H1 (cell line): ENCODE measurements at regions of chr16 and their contacts with region 1.

Region 1: DNA sequence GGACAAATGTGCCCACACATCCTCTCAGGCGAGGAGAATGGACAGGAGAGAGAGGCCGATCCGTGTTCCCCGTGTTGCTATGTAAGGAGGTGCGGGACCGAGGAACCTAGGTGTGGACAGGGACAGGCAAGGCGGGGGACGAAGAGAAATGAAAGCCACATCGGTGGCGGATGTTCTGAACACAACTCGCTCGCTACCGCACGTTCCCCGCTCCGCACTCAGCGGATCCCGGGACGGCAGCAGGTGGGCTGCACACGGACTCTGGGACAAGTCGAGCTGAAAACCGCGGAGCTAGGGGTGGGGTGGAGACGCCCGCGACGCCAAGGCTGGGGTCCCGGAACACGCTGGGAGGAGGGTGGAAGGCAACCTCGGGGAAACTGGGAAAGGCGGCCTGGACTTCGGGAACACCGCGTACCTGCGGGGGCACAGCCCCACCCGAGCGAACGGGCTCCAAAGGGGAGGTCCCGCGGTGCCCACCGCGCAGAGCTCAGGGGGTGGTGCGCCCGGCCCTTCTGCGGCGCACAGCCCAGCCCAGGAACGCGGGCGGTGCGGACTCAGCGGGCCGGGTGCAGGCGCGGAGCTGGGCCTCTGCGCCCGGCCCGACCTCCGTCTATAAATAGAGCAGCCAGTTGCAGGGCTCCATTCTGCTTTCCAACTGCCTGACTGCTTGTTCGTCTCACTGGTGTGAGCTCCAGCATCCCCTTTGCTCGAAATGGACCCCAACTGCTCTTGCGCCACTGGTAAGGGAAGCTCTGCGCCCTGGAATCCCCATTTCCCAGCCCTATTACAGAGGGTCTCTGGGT is at the start of gene MT1E:
- DNase-seq: peak in 1 of 2 experiments; percentile 66
- H3K4me3 ChIP-seq: peak within 1 kb of the TSS; percentile 26 to 61 (median 46)
- H3K27ac ChIP-seq: no peak within 1 kb of the TSS
- H3K4me1 ChIP-seq: peaks cover 0 to 17% (median 14%) of the 10 kb centered on the region in 4 experiments; a peak in 6 of 7 replicates
- H3K27me3 ChIP-seq: peaks cover 53 to 86% (median 82%) of the 10 kb centered on the region in 4 experiments
- CTCF ChIP-seq: no peak
- EP300 ChIP-seq: no peak
- POLR2A ChIP-seq: no peak
- RAD21 ChIP-seq: no peak
- total RNA-seq, gene MT1E: 3.5 and 7.9 TPM in 2 replicates

Region 2: DNA sequence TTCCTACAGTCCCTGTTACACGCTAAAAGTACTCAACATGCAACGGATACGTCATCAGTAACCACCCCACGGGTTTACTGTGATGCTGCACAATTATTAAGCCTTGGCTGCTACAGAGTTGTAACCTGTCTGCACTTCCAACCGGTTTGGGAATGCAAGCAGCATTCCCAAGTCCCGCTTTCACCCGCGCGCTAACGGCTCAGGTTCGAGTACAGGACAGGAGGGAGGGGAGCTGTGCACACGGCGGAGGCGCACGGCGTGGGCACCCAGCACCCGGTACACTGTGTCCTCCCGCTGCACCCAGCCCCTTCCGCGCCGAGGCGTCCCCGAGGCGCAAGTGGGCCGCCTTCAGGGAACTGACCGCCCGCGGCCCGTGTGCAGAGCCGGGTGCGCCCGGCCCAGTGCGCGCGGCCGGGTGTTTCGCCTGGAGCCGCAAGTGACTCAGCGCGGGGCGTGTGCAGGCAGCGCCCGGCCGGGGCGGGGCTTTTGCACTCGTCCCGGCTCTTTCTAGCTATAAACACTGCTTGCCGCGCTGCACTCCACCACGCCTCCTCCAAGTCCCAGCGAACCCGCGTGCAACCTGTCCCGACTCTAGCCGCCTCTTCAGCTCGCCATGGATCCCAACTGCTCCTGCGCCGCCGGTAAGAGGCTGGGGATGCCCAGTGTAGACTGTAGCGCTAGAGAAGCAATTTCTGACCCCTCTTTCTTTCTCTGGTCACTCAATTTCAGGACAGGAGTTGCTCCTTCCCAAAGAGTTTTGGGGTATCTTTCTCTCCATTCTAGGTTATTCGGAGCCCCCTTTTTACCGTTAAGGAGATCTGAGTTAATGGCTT is 17.1 kb before region 1 on chr16 and contains the start of gene MT2A:
- CTCF ChIA-PET with region 1: interaction called, 11 read pairs
- POLR2A ChIA-PET with region 1: interaction called, 66 read pairs
- DNase-seq: peak in 1 of 2 experiments; percentile 74
- H3K4me3 ChIP-seq: peak within 1 kb of the TSS; percentile 35 to 62 (median 47)
- H3K27ac ChIP-seq: no peak within 1 kb of the TSS
- H3K4me1 ChIP-seq: peaks cover 7 to 21% (median 10%) of the 10 kb centered on the region in 4 experiments
- H3K27me3 ChIP-seq: peaks cover 27 to 64% (median 52%) of the 10 kb centered on the region in 4 experiments
- CTCF ChIP-seq: no peak
- EP300 ChIP-seq: no peak
- POLR2A ChIP-seq: no peak
- RAD21 ChIP-seq: no peak
- total RNA-seq, gene MT2A: 9.2 and 9.5 TPM in 2 replicates

Region 3: GRCh38 chr16:56643080-56643778 is 17.9 kb after region 1 on chr16:
- CTCF ChIA-PET with region 1: interaction called, 12 read pairs
- POLR2A ChIA-PET with region 1: interaction called, 32 read pairs
- DNase-seq: peak in 1 of 2 experiments; percentile 67
- H3K4me3 ChIP-seq: peak overlapping the region; percentile 18 to 51 (median 34); a peak in 7 of 8 replicates
- H3K27ac ChIP-seq: no peak overlapping the region
- H3K4me1 ChIP-seq: peaks cover 3 to 20% (median 7%) of the 10 kb centered on the region in 4 experiments
- H3K27me3 ChIP-seq: peaks cover 84 to 100% (median 99%) of the 10 kb centered on the region in 4 experiments
- CTCF ChIP-seq: peak; percentile 39 to 50 (median 42)
- EP300 ChIP-seq: no peak
- POLR2A ChIP-seq: no peak
- RAD21 ChIP-seq: peak; percentile 32 to 36

Region 4: GRCh38 chr16:56667581-56668571 is 42.5 kb after region 1 on chr16 and contains the start of gene MT1G:
- CTCF ChIA-PET with region 1: interaction called, 3 read pairs
- POLR2A ChIA-PET with region 1: interaction called, 57 read pairs
- DNase-seq: peak in 1 of 2 experiments; percentile 70
- H3K4me3 ChIP-seq: peak within 1 kb of the TSS; percentile 13 to 53 (median 16); a peak in 5 of 8 replicates
- H3K27ac ChIP-seq: no peak within 1 kb of the TSS
- H3K4me1 ChIP-seq: peaks cover 3 to 16% (median 12%) of the 10 kb centered on the region in 4 experiments
- H3K27me3 ChIP-seq: peaks cover 81 to 98% (median 93%) of the 10 kb centered on the region in 4 experiments
- CTCF ChIP-seq: no peak
- EP300 ChIP-seq: no peak
- POLR2A ChIP-seq: no peak
- RAD21 ChIP-seq: no peak
- total RNA-seq, gene MT1G: 17.7 and 19.7 TPM in 2 replicates

Region 5: GRCh38 chr16:56681939-56682702 is 56.8 kb after region 1 on chr16 and contains the start of gene MT1X:
- CTCF ChIA-PET with region 1: interaction called, 4 read pairs
- POLR2A ChIA-PET with region 1: interaction called, 29 read pairs
- DNase-seq: peak in 1 of 2 experiments; percentile 76
- H3K4me3 ChIP-seq: peak within 1 kb of the TSS; percentile 57 to 77 (median 69)
- H3K27ac ChIP-seq: no peak within 1 kb of the TSS
- H3K4me1 ChIP-seq: peaks cover 0 to 19% (median 8%) of the 10 kb centered on the region in 4 experiments; a peak in 6 of 7 replicates
- H3K27me3 ChIP-seq: peaks cover 0 to 41% (median 24%) of the 10 kb centered on the region in 4 experiments; a peak in 5 of 7 replicates
- CTCF ChIP-seq: no peak
- EP300 ChIP-seq: no peak
- POLR2A ChIP-seq: peak in 1 of 2 experiments; percentile 61; a peak in 2 of 3 replicates
- RAD21 ChIP-seq: no peak
- total RNA-seq, gene MT1X: 52.4 and 64.5 TPM in 2 replicates